ENCODE measurements at regions of chr19 and their contacts with region 1.

Region 1: GRCh38 chr19:45423589-45424190 is at the start of gene ERCC1:
- DNase-seq: peak; percentile 95
- total RNA-seq, gene ERCC1: 89.0 TPM

Region 2: GRCh38 chr19:45234089-45234869 is 189.4 kb before region 1 on chr19:
- intact Hi-C with region 1: no loop called
- DNase-seq: no peak

Region 3: DNA sequence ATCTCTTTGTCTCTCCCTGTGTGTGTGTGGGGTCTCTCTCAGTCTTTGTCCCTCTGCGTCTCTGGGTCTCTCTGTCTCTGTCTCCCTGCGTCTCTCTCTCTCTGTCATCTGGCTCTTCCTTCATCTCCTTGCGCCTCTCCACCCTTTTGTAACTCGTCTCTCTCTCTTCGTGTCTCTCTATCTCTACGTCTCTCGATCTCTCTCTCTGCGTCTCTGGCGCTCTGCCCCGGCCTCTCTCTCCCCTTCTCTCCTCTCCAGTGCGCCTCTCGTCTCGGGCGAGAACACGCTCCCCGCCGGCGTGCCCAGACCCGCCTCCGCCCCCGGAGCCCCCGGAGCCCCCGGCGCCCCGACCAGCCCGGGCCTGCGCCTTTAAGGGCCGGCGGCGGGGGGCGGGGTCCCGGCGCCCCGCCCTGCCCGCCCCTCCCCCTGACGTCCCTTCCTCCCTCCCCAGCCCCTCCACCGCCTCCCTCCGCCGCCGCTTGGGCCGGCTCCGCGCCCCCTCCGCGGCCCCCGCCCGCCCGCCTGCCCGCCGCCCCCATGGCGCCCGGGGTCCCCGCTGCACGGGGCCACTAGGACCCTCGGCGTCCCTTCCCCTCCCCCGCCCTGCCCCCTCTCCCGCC is 172.7 kb before region 1 on chr19 and contains the start of gene MARK4:
- intact Hi-C with region 1: no loop called
- DNase-seq: peak; percentile 80
- total RNA-seq, gene MARK4: 36.6 TPM

Region 4: GRCh38 chr19:45340232-45340898 is 83.3 kb before region 1 on chr19 and contains the start of gene KLC3:
- intact Hi-C with region 1: no loop called
- DNase-seq: no peak
- total RNA-seq, gene KLC3: not detected

Region 5: DNA sequence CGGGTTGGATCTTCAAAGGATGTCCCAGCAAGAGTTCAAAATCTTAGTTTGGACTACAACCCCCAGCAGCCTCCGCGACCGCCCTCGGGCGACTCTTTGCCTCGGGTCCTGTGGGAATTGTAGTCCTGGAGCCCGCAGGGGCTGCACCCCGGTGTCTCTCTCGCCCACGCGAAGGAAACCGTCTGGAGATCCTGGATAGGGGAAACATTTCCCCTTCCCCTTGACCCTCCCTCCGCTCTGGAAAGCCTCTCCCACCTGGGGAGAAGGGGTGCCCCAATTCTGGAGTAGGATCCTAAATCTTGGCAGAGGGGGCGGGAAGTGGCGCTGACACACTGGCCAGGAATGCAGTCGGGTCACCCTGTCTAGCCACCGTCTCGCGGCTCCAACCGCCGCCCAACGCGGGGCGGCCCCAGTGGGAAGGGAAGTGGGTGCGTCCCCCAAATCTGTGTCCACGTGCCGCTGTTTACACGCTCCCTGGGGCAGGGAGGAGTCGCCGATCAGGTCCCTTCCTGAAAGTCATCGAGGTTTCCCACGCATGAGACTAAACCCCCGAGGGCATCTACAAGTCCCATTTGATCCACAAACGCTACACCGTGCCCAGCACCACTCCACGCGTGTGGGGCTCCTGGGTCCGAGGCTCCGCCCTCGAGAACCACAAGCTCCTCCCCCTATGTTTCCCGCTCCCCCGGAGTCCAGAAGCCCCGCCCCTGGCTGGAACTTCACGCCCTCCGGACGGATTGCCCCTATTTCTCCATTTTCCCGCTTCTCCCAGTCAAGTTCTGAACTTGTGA is 18.1 kb before region 1 on chr19:
- intact Hi-C with region 1: loop called (anchors 2 kb)
- DNase-seq: peak; percentile 94

Region 6: GRCh38 chr19:45439569-45440254 is 16.0 kb after region 1 on chr19:
- intact Hi-C with region 1: no loop called
- DNase-seq: peak; percentile 94